ENCODE measurements at regions of chr3 and their contacts with region 1.

Region 1: DNA sequence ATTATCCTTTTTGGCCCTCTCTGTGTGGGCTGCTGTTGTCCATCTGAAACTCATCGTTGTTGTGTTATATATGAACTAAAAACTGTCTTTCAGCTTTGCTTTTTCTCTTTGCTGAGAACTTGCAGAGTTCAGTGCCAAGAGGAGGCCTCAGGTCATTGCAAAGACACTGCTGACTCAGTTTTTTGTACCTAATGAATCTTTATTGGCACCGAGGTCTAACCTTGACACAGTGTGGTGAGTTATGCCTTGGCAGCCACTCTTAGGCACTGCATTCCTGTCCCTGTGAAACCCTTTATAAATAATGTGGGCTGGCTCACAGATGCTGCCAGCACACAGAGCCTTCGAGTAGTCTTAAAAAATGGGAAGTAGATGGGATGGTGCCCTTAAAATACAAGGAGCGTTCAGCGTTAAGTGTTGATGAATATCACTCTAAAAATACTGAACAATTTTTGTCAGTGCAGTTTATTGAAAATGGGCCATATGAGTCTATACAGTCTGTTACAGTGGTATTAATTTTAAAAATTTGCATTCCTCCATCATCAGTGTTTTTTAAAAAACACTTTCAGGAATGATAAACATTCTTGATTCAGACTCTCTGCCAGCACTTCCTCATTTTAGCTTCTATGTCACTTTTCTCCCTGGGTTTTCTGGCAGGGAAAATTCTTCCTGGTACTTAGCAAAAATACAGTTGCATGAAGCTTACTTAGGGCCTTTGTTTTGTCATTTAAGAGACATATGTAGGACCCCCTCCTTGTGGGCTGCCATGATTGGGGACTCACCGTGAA is 234.1 kb downstream of the CACNA2D3 start:
- DNase-seq: peak in 1 of 2 donors; percentile 56
- ATAC-seq: peak; percentile 58 to 91 (median 84)
- H3K4me3 ChIP-seq: no peak overlapping the region
- H3K27ac ChIP-seq: peak overlapping the region in 8 of 10 donors; percentile 13 to 66 (median 48)
- H3K4me1 ChIP-seq: peaks cover 0 to 66% (median 29%) of the 10 kb centered on the region in 9 donors
- H3K27me3 ChIP-seq: no peaks in the 10 kb centered on the region
- CTCF ChIP-seq: no peak

Region 2: DNA sequence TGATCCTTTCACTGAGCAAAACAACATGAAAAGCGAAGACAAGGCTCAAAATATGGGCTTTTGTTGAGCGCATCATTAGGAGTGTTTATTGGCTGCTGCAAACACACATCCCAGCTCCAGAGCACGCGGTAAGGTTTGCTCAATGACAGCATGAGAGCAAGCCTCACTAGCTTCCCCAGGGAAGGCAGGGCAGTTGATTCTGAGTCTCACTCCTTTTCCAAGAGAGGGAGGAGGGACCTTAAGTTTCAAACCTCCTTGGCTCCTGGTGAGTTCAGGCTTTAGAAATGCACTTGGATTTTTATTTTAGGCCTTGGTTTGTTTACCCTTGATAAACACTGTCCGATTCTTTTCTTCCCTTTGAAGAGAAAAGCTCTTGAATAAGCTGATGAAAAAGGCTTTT is 303.2 kb before region 1 on chr3:
- intact Hi-C with region 1: no loop called
- DNase-seq: peak in 1 of 2 donors; percentile 19
- ATAC-seq: peak in 7 of 8 donors; percentile 38 to 81 (median 56)
- H3K4me3 ChIP-seq: no peak overlapping the region
- H3K27ac ChIP-seq: no peak overlapping the region
- H3K4me1 ChIP-seq: peaks cover 0 to 3% (median 0%) of the 10 kb centered on the region in 9 donors
- H3K27me3 ChIP-seq: no peaks in the 10 kb centered on the region
- CTCF ChIP-seq: no peak

Region 3: GRCh38 chr3:54120657-54121413 is 235.6 kb before region 1 on chr3:
- intact Hi-C with region 1: loop called in 1 of 10 experiments (anchors 2 kb)
- DNase-seq: peak in 1 of 2 donors; percentile 17
- ATAC-seq: peak in 4 of 8 donors; percentile 34 to 51 (median 44)
- H3K4me3 ChIP-seq: peak overlapping the region; percentile 38 to 70 (median 60)
- H3K27ac ChIP-seq: no peak overlapping the region
- H3K4me1 ChIP-seq: peaks cover 2 to 15% (median 11%) of the 10 kb centered on the region in 9 donors
- H3K27me3 ChIP-seq: peaks cover 0 to 70% (median 34%) of the 10 kb centered on the region in 7 donors
- CTCF ChIP-seq: no peak

Region 4: GRCh38 chr3:54146506-54147239 is 209.8 kb before region 1 on chr3:
- intact Hi-C with region 1: loop called in 2 of 10 experiments (anchors 5 kb)
- DNase-seq: peak; percentile 31 to 63
- ATAC-seq: peak; percentile 82 to 93 (median 92)
- H3K4me3 ChIP-seq: no peak overlapping the region
- H3K27ac ChIP-seq: no peak overlapping the region
- H3K4me1 ChIP-seq: peaks cover 0 to 15% (median 0%) of the 10 kb centered on the region in 9 donors
- H3K27me3 ChIP-seq: no peaks in the 10 kb centered on the region
- CTCF ChIP-seq: peak; percentile 42 to 76 (median 70)

Region 5: GRCh38 chr3:54225841-54226528 is 130.5 kb before region 1 on chr3:
- intact Hi-C with region 1: loop called in 1 of 10 experiments (anchors 10 kb)
- DNase-seq: no peak
- ATAC-seq: peak in 7 of 8 donors; percentile 63 to 92 (median 75)
- H3K4me3 ChIP-seq: no peak overlapping the region
- H3K27ac ChIP-seq: peak overlapping the region in 5 of 10 donors; percentile 2 to 60 (median 3)
- H3K4me1 ChIP-seq: peaks cover 0 to 4% (median 0%) of the 10 kb centered on the region in 9 donors
- H3K27me3 ChIP-seq: no peaks in the 10 kb centered on the region
- CTCF ChIP-seq: no peak

Measured in heart right ventricle (tissue), 16 donors.